Mammary epithelial cell (primary cell): ENCODE measurements at regions of chr14 and their contacts with region 1.

Region 1: GRCh38 chr14:74671789-74672188 is 41.1 kb downstream of the AREL1 start:
- DNase-seq: peak; percentile 73
- H3K4me3 ChIP-seq: no peak overlapping the region
- H3K27ac ChIP-seq: peak overlapping the region; percentile 1
- H3K4me1 ChIP-seq: peaks cover 16% of the 10 kb centered on the region
- H3K27me3 ChIP-seq: no peaks in the 10 kb centered on the region
- CTCF ChIP-seq: no peak

Region 2: GRCh38 chr14:73977600-73978295 is 694.0 kb before region 1 on chr14:
- CTCF ChIA-PET with region 1: no interaction called
- dilution Hi-C with region 1: no loop called
- in situ Hi-C with region 1: no loop called
- intact Hi-C with region 1: no loop called
- DNase-seq: no peak
- H3K4me3 ChIP-seq: no peak overlapping the region
- H3K27ac ChIP-seq: no peak overlapping the region
- H3K4me1 ChIP-seq: no peaks in the 10 kb centered on the region
- H3K27me3 ChIP-seq: no peaks in the 10 kb centered on the region
- CTCF ChIP-seq: no peak

Region 3: GRCh38 chr14:74653386-74654138 is 18.2 kb before region 1 on chr14:
- CTCF ChIA-PET with region 1: interaction called, 13 read pairs
- dilution Hi-C with region 1: no loop called
- in situ Hi-C with region 1: no loop called
- intact Hi-C with region 1: no loop called
- DNase-seq: no peak
- H3K4me3 ChIP-seq: no peak overlapping the region
- H3K27ac ChIP-seq: no peak overlapping the region
- H3K4me1 ChIP-seq: peaks cover 81% of the 10 kb centered on the region
- H3K27me3 ChIP-seq: no peaks in the 10 kb centered on the region
- CTCF ChIP-seq: no peak

Region 4: DNA sequence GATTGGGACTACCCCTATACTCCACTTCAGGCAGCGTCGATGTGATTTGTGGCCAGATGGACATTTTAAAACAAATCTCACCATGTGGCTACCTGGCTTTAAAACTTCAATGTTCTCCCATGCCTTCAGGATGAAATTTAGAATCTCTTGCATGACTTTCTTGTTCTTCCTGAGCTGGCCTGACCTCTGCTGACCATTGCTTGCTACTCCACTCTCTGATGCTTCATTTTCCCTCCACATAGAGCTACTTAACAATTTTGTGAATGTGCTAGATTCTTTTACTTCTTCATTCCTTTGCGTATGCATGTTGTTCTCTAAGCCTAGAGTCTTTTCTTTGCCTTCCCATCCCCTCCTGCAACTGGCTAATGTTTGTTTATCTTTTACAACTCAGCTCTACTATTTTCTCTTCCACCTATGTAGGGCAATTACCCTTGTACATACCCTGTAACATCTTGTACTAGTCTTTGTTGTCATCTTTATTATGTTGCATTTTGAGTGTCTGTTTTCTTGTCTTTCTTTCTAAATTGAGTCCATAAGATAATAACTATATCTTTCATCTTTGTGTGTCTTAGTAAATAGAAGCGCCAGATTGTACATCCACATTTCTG is 132.5 kb after region 1 on chr14:
- CTCF ChIA-PET with region 1: no interaction called
- dilution Hi-C with region 1: no loop called
- in situ Hi-C with region 1: no loop called
- intact Hi-C with region 1: loop called (anchors 5 kb)
- DNase-seq: peak; percentile 33
- H3K4me3 ChIP-seq: no peak overlapping the region
- H3K27ac ChIP-seq: no peak overlapping the region
- H3K4me1 ChIP-seq: no peaks in the 10 kb centered on the region
- H3K27me3 ChIP-seq: no peaks in the 10 kb centered on the region
- CTCF ChIP-seq: peak; percentile 33 to 51

Region 5: GRCh38 chr14:75689012-75689411 is 1017.2 kb after region 1 on chr14:
- CTCF ChIA-PET with region 1: no interaction called
- dilution Hi-C with region 1: no loop called
- in situ Hi-C with region 1: no loop called
- intact Hi-C with region 1: no loop called
- DNase-seq: peak; percentile 16
- H3K4me3 ChIP-seq: no peak overlapping the region
- H3K27ac ChIP-seq: no peak overlapping the region
- H3K4me1 ChIP-seq: no peaks in the 10 kb centered on the region
- H3K27me3 ChIP-seq: no peaks in the 10 kb centered on the region
- CTCF ChIP-seq: no peak